ENCODE measurements at regions of chr1 and their contacts with region 1.

Region 1: GRCh38 chr1:224513787-224514209 is 79.2 kb upstream of the WDR26 start:
- DNase-seq: peak; percentile 71
- H3K4me3 ChIP-seq: no peak overlapping the region
- H3K27ac ChIP-seq: no peak overlapping the region
- H3K4me1 ChIP-seq: peaks cover 10% of the 10 kb centered on the region
- H3K27me3 ChIP-seq: no peaks in the 10 kb centered on the region
- CTCF ChIP-seq: peak; percentile 69 to 89

Region 2: DNA sequence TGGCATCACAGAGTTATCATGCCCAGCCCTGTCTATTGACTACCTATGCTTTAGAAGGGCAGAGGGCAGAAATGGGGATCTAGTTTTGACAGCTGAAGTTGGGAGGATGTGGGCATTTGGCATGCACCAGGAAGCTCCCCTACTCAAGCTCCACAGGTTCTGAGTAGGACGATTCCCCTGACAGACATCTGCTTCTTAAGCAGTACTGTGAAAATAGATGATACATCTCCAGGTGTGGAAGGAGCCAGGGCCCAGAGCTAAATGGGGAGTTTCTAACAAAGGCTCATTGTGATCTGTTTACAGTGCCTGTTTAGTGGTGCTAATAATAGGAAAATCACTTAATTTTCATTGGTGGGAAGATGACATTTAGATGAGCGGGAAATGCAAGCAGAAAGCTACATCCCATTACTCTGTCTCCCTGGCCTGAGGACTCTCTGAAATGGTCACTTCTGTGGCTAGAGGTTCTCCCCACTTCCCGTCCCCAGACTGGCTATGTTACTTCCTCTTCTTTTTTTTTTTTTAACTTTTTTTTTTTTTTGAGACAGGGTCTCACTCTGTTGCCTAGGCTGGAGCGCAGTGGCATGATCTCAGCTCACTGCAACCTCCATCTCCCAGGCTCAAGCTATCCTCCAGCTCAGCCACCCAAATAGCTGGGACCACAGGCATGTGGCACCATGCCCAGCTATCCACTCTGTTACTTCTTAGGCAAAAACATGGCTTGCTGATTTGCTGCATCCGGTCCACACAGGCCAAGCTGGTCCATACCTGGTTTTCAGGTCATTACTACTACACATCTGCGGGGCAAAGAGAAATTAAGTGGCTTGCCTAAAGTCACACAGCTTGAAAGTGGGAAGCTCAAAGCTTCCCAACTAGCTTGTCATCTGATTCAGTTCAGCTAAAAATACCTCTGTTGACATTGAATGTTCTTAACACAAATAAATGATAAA is 79.1 kb after region 1 on chr1:
- CTCF ChIA-PET with region 1: no interaction called
- dilution Hi-C with region 1: no loop called
- in situ Hi-C with region 1: no loop called
- intact Hi-C with region 1: loop called (anchors 5 kb)
- DNase-seq: peak; percentile 88
- H3K4me3 ChIP-seq: no peak overlapping the region
- H3K27ac ChIP-seq: peak overlapping the region; percentile 31
- H3K4me1 ChIP-seq: peaks cover 12% of the 10 kb centered on the region
- H3K27me3 ChIP-seq: no peaks in the 10 kb centered on the region
- CTCF ChIP-seq: no peak

Region 3: GRCh38 chr1:224644553-224645154 is 130.9 kb after region 1 on chr1:
- CTCF ChIA-PET with region 1: no interaction called
- dilution Hi-C with region 1: no loop called
- in situ Hi-C with region 1: no loop called
- intact Hi-C with region 1: loop called (anchors 1 kb)
- DNase-seq: peak; percentile 48
- H3K4me3 ChIP-seq: no peak overlapping the region
- H3K27ac ChIP-seq: no peak overlapping the region
- H3K4me1 ChIP-seq: no peaks in the 10 kb centered on the region
- H3K27me3 ChIP-seq: no peaks in the 10 kb centered on the region
- CTCF ChIP-seq: peak; percentile 93 to 95

Region 4: DNA sequence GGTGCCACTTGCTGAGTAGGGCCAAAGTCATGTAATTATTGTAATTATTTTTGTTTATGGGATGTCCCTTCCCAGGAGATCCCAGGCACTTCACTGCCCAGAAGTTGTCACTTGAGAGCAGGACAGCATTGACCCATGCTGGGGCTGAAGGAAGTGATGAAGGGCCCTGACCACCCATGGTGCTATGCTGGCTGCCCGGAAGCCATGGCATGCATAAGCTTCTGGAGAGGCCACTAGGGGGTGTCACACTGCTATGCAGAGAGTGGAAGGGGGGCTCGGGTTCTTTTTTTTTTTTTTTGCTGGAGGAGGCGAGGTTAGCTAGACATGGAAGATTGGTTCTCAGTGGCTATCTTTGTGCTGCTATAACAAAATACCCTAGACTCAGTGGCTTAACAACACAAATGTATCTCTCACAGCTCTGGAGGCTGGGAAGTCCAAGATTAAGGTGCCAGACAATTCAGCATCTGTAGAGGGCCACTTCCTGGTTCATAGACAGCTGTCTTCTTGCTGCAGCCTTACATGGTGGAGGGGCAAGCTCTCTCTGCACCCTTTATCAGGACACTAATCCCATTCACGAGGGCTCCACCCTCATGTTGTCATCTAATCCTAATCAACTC is 187.2 kb after region 1 on chr1:
- CTCF ChIA-PET with region 1: no interaction called
- dilution Hi-C with region 1: no loop called
- in situ Hi-C with region 1: no loop called
- intact Hi-C with region 1: loop called (anchors 1 kb)
- DNase-seq: no peak
- H3K4me3 ChIP-seq: no peak overlapping the region
- H3K27ac ChIP-seq: no peak overlapping the region
- H3K4me1 ChIP-seq: no peaks in the 10 kb centered on the region
- H3K27me3 ChIP-seq: no peaks in the 10 kb centered on the region
- CTCF ChIP-seq: peak; percentile 35 to 55

Region 5: DNA sequence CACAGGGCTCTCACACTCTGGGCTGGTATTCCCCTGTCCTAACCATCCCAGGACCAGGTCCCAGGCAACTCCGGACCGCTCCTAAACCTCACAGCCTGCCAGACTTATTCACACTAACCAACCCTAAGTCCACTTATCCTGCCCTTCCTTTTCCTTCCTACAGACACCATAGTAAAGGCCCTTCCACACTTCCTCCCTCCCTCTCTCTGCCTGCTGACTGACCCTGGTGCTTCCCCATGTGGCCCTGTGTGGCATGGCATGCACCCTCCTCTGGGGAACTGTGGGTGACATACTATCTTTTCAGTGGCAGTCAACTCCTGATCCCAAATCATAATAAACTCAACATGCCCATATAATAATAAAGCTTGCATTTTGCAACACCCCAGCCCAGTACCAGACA is 260.6 kb after region 1 on chr1:
- CTCF ChIA-PET with region 1: no interaction called
- dilution Hi-C with region 1: no loop called
- in situ Hi-C with region 1: no loop called
- intact Hi-C with region 1: loop called (anchors 1 kb)
- DNase-seq: peak; percentile 5
- H3K4me3 ChIP-seq: no peak overlapping the region
- H3K27ac ChIP-seq: no peak overlapping the region
- H3K4me1 ChIP-seq: peaks cover 5% of the 10 kb centered on the region
- H3K27me3 ChIP-seq: no peaks in the 10 kb centered on the region
- CTCF ChIP-seq: peak; percentile 51 to 57

Region 6: GRCh38 chr1:224851210-224851847 is 337.5 kb after region 1 on chr1:
- CTCF ChIA-PET with region 1: interaction called, 5 read pairs
- dilution Hi-C with region 1: no loop called
- in situ Hi-C with region 1: loop called (anchors 5 kb)
- intact Hi-C with region 1: loop called (anchors 1 kb)
- DNase-seq: peak; percentile 44
- H3K4me3 ChIP-seq: no peak overlapping the region
- H3K27ac ChIP-seq: no peak overlapping the region
- H3K4me1 ChIP-seq: no peaks in the 10 kb centered on the region
- H3K27me3 ChIP-seq: no peaks in the 10 kb centered on the region
- CTCF ChIP-seq: peak; percentile 87 to 91

Region 7: DNA sequence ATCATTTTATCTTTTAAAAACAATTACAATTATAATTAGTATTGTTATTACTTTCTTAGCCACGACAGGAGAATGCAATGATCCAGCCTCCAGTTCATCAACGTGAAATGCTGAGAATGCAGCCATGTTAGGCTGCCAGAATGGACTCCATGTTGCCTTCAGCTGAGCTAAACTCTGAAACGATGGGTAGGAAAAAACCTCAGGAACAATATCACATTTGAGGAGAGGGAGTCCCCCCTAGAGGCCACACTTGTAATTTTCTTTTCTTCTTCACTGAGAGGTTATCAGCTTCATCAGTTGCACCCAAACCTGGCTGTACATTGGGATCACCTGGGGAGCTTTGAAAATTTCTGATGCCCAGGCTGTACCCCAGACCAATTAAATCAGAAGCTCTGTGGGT is 381.1 kb after region 1 on chr1:
- CTCF ChIA-PET with region 1: no interaction called
- dilution Hi-C with region 1: no loop called
- in situ Hi-C with region 1: no loop called
- intact Hi-C with region 1: loop called (anchors 1 kb)
- DNase-seq: peak; percentile 9
- H3K4me3 ChIP-seq: no peak overlapping the region
- H3K27ac ChIP-seq: no peak overlapping the region
- H3K4me1 ChIP-seq: no peaks in the 10 kb centered on the region
- H3K27me3 ChIP-seq: peaks cover 1% of the 10 kb centered on the region
- CTCF ChIP-seq: peak; percentile 38 to 45